ENCODE measurements at regions of chr6 and their contacts with region 1.

Region 1: DNA sequence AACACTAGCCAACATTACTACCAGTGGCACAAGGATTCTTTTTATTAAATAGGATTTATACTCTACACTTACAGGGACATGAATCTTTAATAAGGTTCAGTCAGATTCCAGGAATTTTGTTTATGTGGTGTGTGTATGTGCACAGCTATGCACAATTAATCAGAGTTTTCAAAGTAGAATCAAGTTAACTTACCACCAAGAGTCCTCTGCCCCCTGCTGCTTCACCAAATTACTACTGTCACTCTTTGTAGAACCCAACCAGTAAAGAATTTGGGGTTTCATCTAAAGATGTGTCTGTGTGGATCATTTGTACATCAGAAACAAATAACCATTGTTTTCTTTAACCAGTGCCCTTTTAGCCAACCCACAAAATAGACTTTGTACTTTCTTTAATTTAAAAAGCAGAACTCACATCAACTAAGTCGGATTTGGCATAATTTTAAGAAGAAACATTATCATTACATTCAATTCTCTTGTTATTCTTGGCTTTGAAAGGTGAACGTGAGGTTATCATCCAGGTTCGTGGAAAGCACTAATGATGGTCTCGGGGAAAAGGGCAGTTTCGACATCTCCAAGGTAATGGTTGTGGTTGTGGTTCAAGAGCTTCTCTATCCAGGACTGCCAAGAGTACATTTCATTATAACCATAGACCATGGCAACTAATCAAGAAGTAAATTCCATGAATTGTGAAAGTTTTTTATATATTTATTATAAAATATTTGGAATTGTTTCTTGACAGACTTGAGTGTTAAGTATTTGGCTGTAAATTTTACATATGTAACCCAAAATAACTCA is 514.3 kb upstream of the ID4 start:
- DNase-seq: peak; percentile 26
- H3K4me3 ChIP-seq: no peak overlapping the region
- H3K27ac ChIP-seq: no peak overlapping the region
- H3K4me1 ChIP-seq: no peaks in the 10 kb centered on the region
- H3K27me3 ChIP-seq: no peaks in the 10 kb centered on the region
- CTCF ChIP-seq: peak; percentile 7 to 40

Region 2: DNA sequence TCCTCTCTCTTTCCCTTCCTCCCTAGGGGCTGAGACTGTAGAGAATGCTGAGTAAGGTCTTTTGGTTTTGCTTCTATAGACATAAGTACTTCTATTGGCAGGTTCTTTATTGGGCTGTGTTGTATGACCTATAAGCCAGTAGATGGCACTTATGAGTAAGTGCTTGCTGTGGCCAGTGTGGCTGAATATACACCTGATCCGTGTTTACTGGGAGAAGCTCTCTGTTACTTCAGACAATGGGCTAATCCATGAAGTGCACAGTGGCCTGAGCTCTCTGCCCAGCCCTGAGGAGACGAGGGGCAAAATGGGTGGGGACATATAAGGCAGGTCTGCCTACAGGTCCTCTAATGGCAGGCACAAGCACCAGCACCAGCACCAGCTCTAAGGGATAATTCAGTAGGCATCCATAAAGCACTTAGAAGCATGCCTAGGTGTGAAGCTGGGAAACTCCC is 325.5 kb before region 1 on chr6:
- CTCF ChIA-PET with region 1: no interaction called
- dilution Hi-C with region 1: no loop called
- in situ Hi-C with region 1: no loop called
- intact Hi-C with region 1: loop called (anchors 2 kb)
- DNase-seq: peak; percentile 40
- H3K4me3 ChIP-seq: no peak overlapping the region
- H3K27ac ChIP-seq: no peak overlapping the region
- H3K4me1 ChIP-seq: no peaks in the 10 kb centered on the region
- H3K27me3 ChIP-seq: no peaks in the 10 kb centered on the region
- CTCF ChIP-seq: peak; percentile 64 to 80

Region 3: DNA sequence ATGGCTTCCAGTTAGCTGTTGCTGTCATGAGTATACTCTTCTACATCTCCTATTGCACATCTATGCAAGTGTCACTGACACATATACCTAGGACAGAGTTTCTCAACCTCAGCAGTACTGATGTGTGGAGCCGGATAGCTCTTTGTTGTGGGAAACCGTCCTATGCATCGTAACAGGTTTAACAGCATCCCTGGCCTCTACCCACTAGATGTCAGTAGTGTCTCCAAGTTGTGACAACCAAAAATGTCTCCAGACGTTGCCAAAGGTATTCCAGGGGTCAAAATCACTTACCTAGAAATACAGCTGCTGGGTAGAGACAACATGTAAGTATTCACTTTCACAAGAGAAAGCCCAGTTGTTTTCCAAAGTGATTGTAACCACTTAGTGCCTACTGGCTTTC is 298.2 kb before region 1 on chr6:
- CTCF ChIA-PET with region 1: interaction called, 5 read pairs
- dilution Hi-C with region 1: no loop called
- in situ Hi-C with region 1: no loop called
- intact Hi-C with region 1: loop called (anchors 2 kb)
- DNase-seq: peak; percentile 37
- H3K4me3 ChIP-seq: no peak overlapping the region
- H3K27ac ChIP-seq: no peak overlapping the region
- H3K4me1 ChIP-seq: no peaks in the 10 kb centered on the region
- H3K27me3 ChIP-seq: no peaks in the 10 kb centered on the region
- CTCF ChIP-seq: peak; percentile 59 to 79

Region 4: GRCh38 chr6:19052219-19052618 is 270.7 kb before region 1 on chr6:
- CTCF ChIA-PET with region 1: no interaction called
- dilution Hi-C with region 1: no loop called
- in situ Hi-C with region 1: no loop called
- intact Hi-C with region 1: no loop called
- DNase-seq: peak; percentile 20
- H3K4me3 ChIP-seq: no peak overlapping the region
- H3K27ac ChIP-seq: no peak overlapping the region
- H3K4me1 ChIP-seq: peaks cover 7% of the 10 kb centered on the region
- H3K27me3 ChIP-seq: no peaks in the 10 kb centered on the region
- CTCF ChIP-seq: no peak

Measured in mammary epithelial cell (primary cell).